Right ventricle myocardium inferior (tissue), 1 donor: ENCODE measurements at regions of chr6 and their contacts with region 1.

Region 1: GRCh38 chr6:139291813-139292619 is at the start of gene TXLNB:
- DNase-seq: peak; percentile 92
- ATAC-seq: peak; percentile 88
- total RNA-seq, gene TXLNB: 122 TPM

Region 2: DNA sequence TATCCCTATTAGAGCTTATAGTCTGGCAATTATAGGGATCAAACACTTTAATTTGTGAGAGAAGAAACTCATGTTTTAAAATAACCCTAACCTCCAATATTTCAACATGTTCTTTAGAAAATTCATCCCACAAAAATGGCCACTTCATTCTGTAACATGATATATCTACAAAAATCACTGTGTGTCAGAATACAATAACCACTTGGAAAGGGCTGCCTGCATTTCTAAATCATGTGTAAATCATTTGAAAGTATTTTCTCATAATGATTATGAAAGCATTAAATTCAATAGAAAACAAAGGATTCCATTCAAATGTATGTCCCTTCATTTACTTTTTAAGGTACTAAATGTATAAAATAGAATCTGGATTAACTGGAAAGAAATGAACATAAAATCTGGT is 691.3 kb before region 1 on chr6:
- intact Hi-C with region 1: no loop called
- DNase-seq: no peak
- ATAC-seq: no peak

Region 3: GRCh38 chr6:139204978-139205377 is 87.0 kb before region 1 on chr6:
- intact Hi-C with region 1: no loop called
- DNase-seq: no peak
- ATAC-seq: no peak

Region 4: GRCh38 chr6:139250296-139251044 is 41.5 kb before region 1 on chr6:
- intact Hi-C with region 1: loop called (anchors 5 kb)
- DNase-seq: no peak
- ATAC-seq: peak; percentile 84